ENCODE measurements at regions of chr2 and their contacts with region 1.

Region 1: GRCh38 chr2:109335631-109336176 is 206.7 kb downstream of the SH3RF3 start:
- DNase-seq: peak; percentile 69
- H3K4me3 ChIP-seq: no peak overlapping the region
- CTCF ChIP-seq: no peak

Region 2: GRCh38 chr2:109260886-109261700 is 74.6 kb before region 1 on chr2:
- in situ Hi-C with region 1: loop called (anchors 5 kb)
- DNase-seq: no peak
- H3K4me3 ChIP-seq: no peak overlapping the region
- CTCF ChIP-seq: peak; percentile 42

Region 3: GRCh38 chr2:109647636-109648035 is 311.9 kb after region 1 on chr2:
- in situ Hi-C with region 1: no loop called
- DNase-seq: no peak
- H3K4me3 ChIP-seq: no peak overlapping the region
- CTCF ChIP-seq: no peak

Measured in astrocyte of the cerebellum (primary cell).